Heart right ventricle (tissue), 16 donors: ENCODE measurements at regions of chr19 and their contacts with region 1.

Region 1: GRCh38 chr19:13195678-13196077 is 45.5 kb downstream of the IER2 start:
- DNase-seq: no peak
- ATAC-seq: no peak
- H3K4me3 ChIP-seq: no peak overlapping the region
- H3K27ac ChIP-seq: no peak overlapping the region
- H3K4me1 ChIP-seq: peaks cover 0 to 18% (median 0%) of the 10 kb centered on the region in 9 donors
- H3K27me3 ChIP-seq: no peaks in the 10 kb centered on the region
- CTCF ChIP-seq: peak in 1 of 9 donors; percentile 22

Region 2: GRCh38 chr19:13255041-13255718 is 59.5 kb after region 1 on chr19:
- intact Hi-C with region 1: loop called in 7 of 10 experiments (anchors 5 kb)
- DNase-seq: no peak
- ATAC-seq: no peak
- H3K4me3 ChIP-seq: no peak overlapping the region
- H3K27ac ChIP-seq: no peak overlapping the region
- H3K4me1 ChIP-seq: no peaks in the 10 kb centered on the region
- H3K27me3 ChIP-seq: peaks cover 0 to 14% (median 4%) of the 10 kb centered on the region in 7 donors
- CTCF ChIP-seq: no peak